AG04449 (cell line): ENCODE measurements at regions of chr1 and their contacts with region 1.

Region 1: GRCh38 chr1:43934101-43934985 is 742 bp downstream of the ARTN start:
- DNase-seq: no peak
- H3K4me3 ChIP-seq: no peak overlapping the region
- CTCF ChIP-seq: peak; percentile 94

Region 2: GRCh38 chr1:43529206-43529731 is 405.1 kb before region 1 on chr1:
- CTCF ChIA-PET with region 1: interaction called, 13 read pairs
- POLR2A ChIA-PET with region 1: no interaction called
- DNase-seq: peak; percentile 53
- H3K4me3 ChIP-seq: no peak overlapping the region
- CTCF ChIP-seq: peak; percentile 91

Region 3: DNA sequence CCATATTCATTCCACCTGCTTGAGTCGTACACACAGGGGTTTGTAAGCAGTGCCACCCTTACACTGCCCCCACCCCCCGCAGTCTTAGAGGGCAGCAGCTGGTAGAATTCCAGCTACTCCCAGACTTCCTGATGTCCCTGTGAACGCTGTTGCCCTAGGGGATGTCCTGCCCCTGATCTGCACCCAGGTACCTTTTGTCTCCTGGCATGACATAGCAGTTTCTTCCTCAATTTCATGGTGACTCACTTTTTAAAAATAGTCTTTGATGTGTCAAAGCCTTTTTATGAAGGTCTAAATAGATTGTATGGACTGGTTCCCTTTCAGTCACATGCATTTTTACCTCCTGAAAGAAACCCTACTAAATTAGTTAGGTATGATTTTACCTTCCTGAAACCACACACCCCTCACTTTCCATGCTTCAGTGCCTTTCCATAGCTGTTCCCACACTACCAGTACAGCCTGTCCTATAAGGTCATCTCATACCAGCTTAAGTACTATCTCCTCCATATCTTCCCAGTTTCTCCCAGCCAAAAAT is 150.6 kb before region 1 on chr1:
- CTCF ChIA-PET with region 1: interaction called, 53 read pairs
- POLR2A ChIA-PET with region 1: no interaction called
- DNase-seq: no peak
- H3K4me3 ChIP-seq: no peak overlapping the region
- CTCF ChIP-seq: no peak

Region 4: GRCh38 chr1:43836267-43836951 is 97.9 kb before region 1 on chr1:
- CTCF ChIA-PET with region 1: interaction called, 14 read pairs
- POLR2A ChIA-PET with region 1: no interaction called
- DNase-seq: no peak
- H3K4me3 ChIP-seq: no peak overlapping the region
- CTCF ChIP-seq: no peak

Region 5: DNA sequence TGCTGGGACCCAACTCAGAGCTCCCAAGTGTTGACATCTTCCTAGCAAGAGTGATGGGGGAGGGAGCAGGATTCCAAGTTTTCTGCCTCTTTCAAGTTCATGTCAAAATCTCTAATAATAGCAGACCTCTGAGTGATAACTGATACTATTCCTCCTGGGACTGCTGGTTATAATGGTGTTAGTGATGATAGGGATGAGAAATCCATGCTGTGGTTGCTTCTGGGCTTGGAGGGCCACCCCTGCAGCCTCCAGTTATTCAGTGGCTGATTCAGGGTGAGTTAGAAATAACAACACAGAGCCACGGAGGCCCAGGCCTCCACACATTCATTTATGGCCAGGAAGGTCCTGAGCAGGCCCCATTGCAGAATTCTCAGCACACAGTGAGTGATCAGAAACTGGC is 41.3 kb before region 1 on chr1:
- CTCF ChIA-PET with region 1: interaction called, 26 read pairs
- POLR2A ChIA-PET with region 1: no interaction called
- DNase-seq: no peak
- H3K4me3 ChIP-seq: no peak overlapping the region
- CTCF ChIP-seq: no peak

Region 6: DNA sequence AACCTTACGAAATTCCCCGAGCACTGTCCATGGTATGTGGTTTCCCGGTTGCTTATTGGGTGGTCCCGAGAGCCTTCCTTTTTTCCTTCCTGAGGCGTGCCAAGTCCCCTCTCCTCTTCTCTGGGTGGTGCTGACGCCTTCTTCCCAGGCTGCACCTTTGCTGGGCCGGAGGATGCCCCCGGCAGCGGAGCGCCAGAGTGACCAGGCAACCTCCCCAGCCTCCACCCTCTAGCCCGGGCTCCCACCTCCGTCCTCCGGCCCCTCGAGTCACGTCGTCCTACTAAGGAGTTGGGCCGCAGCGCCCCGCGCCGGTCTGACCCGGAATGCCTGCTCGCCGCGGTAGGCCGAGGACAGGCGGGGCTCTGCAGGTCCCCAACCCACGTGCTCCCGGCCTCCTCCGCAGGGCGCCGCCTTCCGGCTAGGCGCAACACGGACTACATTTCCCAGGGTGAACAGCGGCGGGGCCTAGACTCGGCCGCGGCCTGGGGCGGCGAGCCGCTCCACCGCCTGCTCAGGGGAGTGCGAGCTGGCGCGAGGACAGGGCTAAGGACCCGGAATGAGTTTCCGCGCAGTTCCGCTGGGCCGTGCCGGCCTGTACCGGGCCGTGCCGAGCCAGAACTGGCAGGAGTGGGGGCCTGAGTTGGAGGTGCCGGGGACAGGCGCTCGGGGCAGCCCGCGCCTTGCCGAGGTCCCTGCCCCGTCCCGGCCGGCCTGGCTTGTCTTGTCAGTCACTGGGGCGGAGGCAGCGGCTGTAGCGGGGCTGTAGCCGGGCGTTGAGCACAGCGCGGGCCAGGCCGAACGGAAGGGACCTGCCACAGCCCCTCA is 12.1 kb after region 1 on chr1 and contains the start of gene IPO13:
- CTCF ChIA-PET with region 1: interaction called, 167 read pairs
- POLR2A ChIA-PET with region 1: no interaction called
- DNase-seq: peak; percentile 38
- H3K4me3 ChIP-seq: peak within 1 kb of the TSS; percentile 86
- CTCF ChIP-seq: peak; percentile 67

Region 7: GRCh38 chr1:44019466-44019948 is 85.2 kb after region 1 on chr1:
- CTCF ChIA-PET with region 1: no interaction called
- POLR2A ChIA-PET with region 1: no interaction called
- DNase-seq: no peak
- H3K4me3 ChIP-seq: no peak overlapping the region
- CTCF ChIP-seq: no peak

Region 8: DNA sequence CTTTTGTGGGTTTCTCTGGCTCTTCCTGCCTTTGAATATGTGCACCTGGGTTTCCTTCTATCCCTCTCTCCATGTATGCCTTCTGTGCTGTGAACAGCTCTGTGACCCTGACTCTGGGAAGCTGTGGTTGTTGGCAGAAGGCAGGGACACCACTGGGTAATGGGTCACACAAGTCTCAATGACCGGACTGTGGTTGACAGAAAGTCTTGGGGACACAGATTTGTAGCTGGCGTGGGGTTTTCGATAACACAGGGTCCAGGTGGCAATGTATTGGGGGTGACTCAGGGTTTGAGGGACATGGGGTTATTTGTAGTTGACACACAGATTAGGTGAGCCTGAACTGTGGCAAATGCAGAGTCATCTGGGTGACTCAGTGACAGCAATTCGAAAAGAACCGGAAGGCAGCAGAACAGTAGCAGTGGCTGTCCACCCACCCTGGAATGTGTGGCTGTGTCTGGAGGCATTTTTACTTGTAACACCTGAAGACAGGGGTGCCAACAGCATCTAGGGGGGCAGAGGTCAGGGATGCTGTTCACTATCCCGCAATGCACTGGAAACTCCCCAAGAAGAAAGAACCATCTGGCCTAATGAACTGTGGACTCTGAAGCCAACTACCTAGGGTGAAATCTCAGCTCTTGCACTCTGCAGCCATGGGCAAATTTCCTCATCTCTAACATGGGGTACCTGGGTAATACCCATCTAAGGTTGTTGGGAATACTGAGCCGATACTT is 109.9 kb after region 1 on chr1:
- CTCF ChIA-PET with region 1: interaction called, 29 read pairs
- POLR2A ChIA-PET with region 1: no interaction called
- DNase-seq: no peak
- H3K4me3 ChIP-seq: no peak overlapping the region
- CTCF ChIP-seq: no peak